Activated T-helper 1 cell treated with anti-CD3 and anti-CD28 coated beads, Interleukin-12 subunit alpha, Interleukin-12 subunit beta, Interleukin-2, Interleukin-4 antibody, amounts not matched to agents 30 ng/mL and 10 ng/mL and 1 ng/mL, durations not matched to agents 14 hours and 24 hours and 36 hours (primary cell): ENCODE measurements at regions of chr6 and their contacts with region 1.

Region 1: GRCh38 chr6:151962246-151962846 is 154.9 kb downstream of the ESR1 start:
- DNase-seq: peak; percentile 25
- H3K4me3 Mint-ChIP-seq: no peak overlapping the region
- H3K27ac Mint-ChIP-seq: peak overlapping the region; percentile 64
- H3K4me1 Mint-ChIP-seq: peaks cover 22% of the 10 kb centered on the region
- H3K27me3 Mint-ChIP-seq: peaks cover 36% of the 10 kb centered on the region

Region 2: DNA sequence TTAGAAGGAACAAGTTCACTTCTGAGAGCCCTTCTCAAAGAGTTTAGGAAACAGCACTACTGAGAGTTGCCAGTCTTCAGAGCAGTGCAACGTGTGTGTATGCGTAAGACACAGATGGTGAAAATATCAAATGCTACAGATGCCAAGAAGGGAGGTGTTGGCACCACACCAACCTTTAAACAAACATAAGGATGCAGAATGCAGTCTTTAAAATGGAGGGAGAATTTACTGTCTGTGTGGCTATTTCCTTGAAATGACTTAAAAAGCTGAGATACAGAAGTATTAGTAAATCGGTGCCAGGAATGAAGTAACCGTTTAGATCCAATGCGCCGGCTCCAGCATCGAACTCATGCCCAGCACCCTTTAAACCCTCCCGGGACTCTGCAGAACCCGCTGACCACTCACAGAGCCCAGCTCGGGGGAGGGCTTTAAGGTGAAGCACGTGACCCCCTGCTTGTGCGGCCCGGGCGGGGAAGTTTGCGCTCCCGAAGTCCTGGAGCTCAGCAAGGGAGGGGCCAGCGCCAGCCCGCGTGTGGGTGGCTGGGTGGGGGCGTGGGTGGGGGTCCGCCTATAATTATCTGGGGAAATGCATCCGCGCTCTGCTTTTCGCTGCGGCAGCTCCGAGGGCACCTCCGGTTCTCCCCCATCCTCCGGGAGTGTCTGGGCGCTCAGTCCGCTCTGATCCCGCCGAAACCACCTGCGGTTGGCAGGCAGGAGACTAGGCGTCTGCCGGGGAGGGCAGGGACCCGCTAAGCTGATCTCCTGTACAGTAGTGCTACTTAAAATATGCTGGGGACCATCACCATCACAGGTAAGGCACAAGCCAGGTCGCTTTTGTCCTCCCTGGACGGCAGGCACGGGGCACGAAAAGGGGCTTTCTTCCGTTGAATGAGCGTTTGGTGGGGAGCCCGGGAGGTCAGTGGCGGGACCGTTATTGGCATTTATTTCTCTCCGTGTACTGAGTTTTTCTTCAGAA is 637.0 kb before region 1 on chr6:
- intact Hi-C with region 1: no loop called
- DNase-seq: no peak
- H3K4me3 Mint-ChIP-seq: peak overlapping the region; percentile 77
- H3K27ac Mint-ChIP-seq: no peak overlapping the region
- H3K4me1 Mint-ChIP-seq: peaks cover 19% of the 10 kb centered on the region
- H3K27me3 Mint-ChIP-seq: peaks cover 41% of the 10 kb centered on the region

Region 3: DNA sequence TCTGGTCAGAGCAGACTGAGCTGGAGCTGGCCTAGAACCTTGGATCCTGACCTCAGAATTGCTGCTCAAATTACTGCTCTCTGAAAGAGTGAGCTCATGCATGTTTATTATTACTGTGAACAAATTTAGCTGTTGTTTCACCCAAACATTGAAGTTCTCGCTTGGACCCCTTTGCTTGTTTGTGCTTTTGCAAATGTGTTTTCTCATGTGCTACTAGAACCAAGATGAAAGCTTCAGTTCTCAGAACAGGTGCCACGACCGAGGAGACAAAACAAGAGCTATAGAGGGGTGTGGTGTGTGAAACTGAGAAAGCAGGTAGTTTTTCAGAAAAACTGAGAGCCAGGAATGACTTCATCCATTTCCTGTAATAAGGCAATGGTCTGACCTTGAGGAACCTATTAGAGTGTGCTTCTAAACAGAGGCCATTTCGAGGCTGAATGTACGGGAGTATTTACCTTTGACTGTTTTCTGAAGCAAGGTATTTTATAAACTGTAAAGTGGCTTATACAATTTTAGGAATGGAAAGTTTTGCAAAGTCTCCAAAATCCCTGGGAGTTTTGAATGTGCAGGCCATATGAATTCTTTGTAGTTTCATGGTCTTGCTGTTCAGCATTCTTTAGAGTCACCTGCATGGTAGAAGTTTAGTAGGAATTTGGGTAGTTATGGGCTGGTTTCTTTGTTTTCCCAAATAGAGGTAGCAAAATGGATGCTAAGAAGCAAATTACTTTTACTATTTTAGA is 204.7 kb before region 1 on chr6:
- intact Hi-C with region 1: loop called (anchors 5 kb)
- DNase-seq: peak; percentile 53
- H3K4me3 Mint-ChIP-seq: peak overlapping the region; percentile 38
- H3K27ac Mint-ChIP-seq: peak overlapping the region; percentile 97
- H3K4me1 Mint-ChIP-seq: peaks cover 63% of the 10 kb centered on the region
- H3K27me3 Mint-ChIP-seq: no peaks in the 10 kb centered on the region

Region 4: GRCh38 chr6:152004036-152004566 is 41.8 kb after region 1 on chr6:
- intact Hi-C with region 1: no loop called
- DNase-seq: no peak
- H3K4me3 Mint-ChIP-seq: no peak overlapping the region
- H3K27ac Mint-ChIP-seq: no peak overlapping the region
- H3K4me1 Mint-ChIP-seq: no peaks in the 10 kb centered on the region
- H3K27me3 Mint-ChIP-seq: no peaks in the 10 kb centered on the region

Region 5: GRCh38 chr6:152117156-152118133 is 155.1 kb after region 1 on chr6:
- intact Hi-C with region 1: no loop called
- DNase-seq: no peak
- H3K4me3 Mint-ChIP-seq: no peak overlapping the region
- H3K27ac Mint-ChIP-seq: no peak overlapping the region
- H3K4me1 Mint-ChIP-seq: peaks cover 12% of the 10 kb centered on the region
- H3K27me3 Mint-ChIP-seq: no peaks in the 10 kb centered on the region